ENCODE measurements at regions of chr18 and their contacts with region 1.

Region 1: GRCh38 chr18:6741232-6741663 is 11.7 kb downstream of the ARHGAP28 start:
- DNase-seq: peak in 1 of 2 donors; percentile 36
- ATAC-seq: peak; percentile 70 to 98 (median 94)
- H3K4me3 ChIP-seq: no peak overlapping the region
- H3K27ac ChIP-seq: peak overlapping the region in 6 of 10 donors; percentile 0 to 75 (median 32)
- H3K4me1 ChIP-seq: peaks cover 0 to 19% (median 8%) of the 10 kb centered on the region in 9 donors
- H3K27me3 ChIP-seq: no peaks in the 10 kb centered on the region
- CTCF ChIP-seq: no peak

Region 2: GRCh38 chr18:6543330-6543908 is 197.8 kb before region 1 on chr18:
- intact Hi-C with region 1: loop called in 1 of 10 experiments (anchors 10 kb)
- DNase-seq: no peak
- ATAC-seq: peak in 1 of 8 donors; percentile 14
- H3K4me3 ChIP-seq: no peak overlapping the region
- H3K27ac ChIP-seq: no peak overlapping the region
- H3K4me1 ChIP-seq: peaks cover 0 to 10% (median 0%) of the 10 kb centered on the region in 9 donors
- H3K27me3 ChIP-seq: no peaks in the 10 kb centered on the region
- CTCF ChIP-seq: peak; percentile 52 to 77 (median 64)

Region 3: GRCh38 chr18:6591491-6591890 is 149.8 kb before region 1 on chr18:
- intact Hi-C with region 1: no loop called
- DNase-seq: no peak
- ATAC-seq: no peak
- H3K4me3 ChIP-seq: no peak overlapping the region
- H3K27ac ChIP-seq: no peak overlapping the region
- H3K4me1 ChIP-seq: no peaks in the 10 kb centered on the region
- H3K27me3 ChIP-seq: no peaks in the 10 kb centered on the region
- CTCF ChIP-seq: no peak

Region 4: GRCh38 chr18:6708890-6709289 is 32.4 kb before region 1 on chr18:
- intact Hi-C with region 1: no loop called
- DNase-seq: no peak
- ATAC-seq: peak in 1 of 8 donors; percentile 56
- H3K4me3 ChIP-seq: no peak overlapping the region
- H3K27ac ChIP-seq: no peak overlapping the region
- H3K4me1 ChIP-seq: no peaks in the 10 kb centered on the region
- H3K27me3 ChIP-seq: no peaks in the 10 kb centered on the region
- CTCF ChIP-seq: no peak

Region 5: GRCh38 chr18:6811816-6812215 is 70.6 kb after region 1 on chr18:
- intact Hi-C with region 1: no loop called
- DNase-seq: no peak
- ATAC-seq: no peak
- H3K4me3 ChIP-seq: no peak overlapping the region
- H3K27ac ChIP-seq: no peak overlapping the region
- H3K4me1 ChIP-seq: no peaks in the 10 kb centered on the region
- H3K27me3 ChIP-seq: no peaks in the 10 kb centered on the region
- CTCF ChIP-seq: no peak